Transverse colon (tissue), 4 donors: ENCODE measurements at regions of chr22 and their contacts with region 1.

Region 1: DNA sequence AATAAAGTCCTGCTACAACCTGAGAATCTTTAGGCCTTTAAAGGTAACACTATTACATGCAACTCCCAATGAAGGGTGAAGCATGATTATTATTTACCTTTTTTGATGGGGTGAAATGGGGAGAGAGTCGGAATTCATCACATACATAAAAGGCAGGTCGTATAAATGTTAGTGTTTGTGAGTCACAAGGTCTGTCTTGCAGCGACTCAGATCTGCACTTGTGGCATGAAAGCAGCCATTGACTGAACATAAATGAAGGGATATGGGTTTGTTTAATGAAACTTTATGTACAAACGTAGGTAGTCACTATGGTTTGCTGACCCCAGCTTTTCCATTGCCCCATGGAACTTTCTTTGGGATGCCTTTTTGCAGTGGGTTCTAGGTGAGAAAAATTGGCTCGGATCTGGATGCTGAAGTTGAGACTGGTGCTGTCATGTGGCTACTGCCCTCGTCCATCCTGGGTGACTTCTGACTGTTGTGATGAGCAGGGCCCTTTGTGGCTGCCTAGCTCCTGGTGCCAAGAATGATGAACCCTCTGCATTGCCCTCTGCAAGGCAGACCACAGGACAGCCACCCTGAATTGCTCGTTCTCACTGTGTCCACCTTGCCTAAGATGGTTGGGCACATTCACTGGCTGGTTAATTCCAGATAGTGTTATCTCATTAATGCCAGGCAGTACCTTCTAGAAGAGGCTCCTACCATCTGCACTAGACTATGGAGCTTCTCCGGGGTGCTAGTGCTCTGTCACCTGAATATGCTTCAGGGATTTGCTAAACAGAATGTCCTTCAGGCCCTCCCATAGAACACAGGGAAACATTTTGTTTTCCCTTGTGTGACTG is 11.3 kb downstream of the GGTLC2 start:
- DNase-seq: no peak
- H3K4me3 ChIP-seq: no peak overlapping the region
- H3K27ac ChIP-seq: no peak overlapping the region
- H3K4me1 ChIP-seq: no peaks in the 10 kb centered on the region
- H3K27me3 ChIP-seq: no peaks in the 10 kb centered on the region
- CTCF ChIP-seq: no peak
- EP300 ChIP-seq: no peak
- POLR2A ChIP-seq: no peak

Region 2: GRCh38 chr22:22609291-22609690 is 46.4 kb before region 1 on chr22:
- in situ Hi-C with region 1: loop called in 1 of 4 experiments (anchors 5 kb)
- intact Hi-C with region 1: no loop called
- DNase-seq: no peak
- H3K4me3 ChIP-seq: no peak overlapping the region
- H3K27ac ChIP-seq: no peak overlapping the region
- H3K4me1 ChIP-seq: no peaks in the 10 kb centered on the region
- H3K27me3 ChIP-seq: no peaks in the 10 kb centered on the region
- CTCF ChIP-seq: no peak
- EP300 ChIP-seq: no peak
- POLR2A ChIP-seq: no peak

Region 3: GRCh38 chr22:22720201-22720723 is 64.6 kb after region 1 on chr22:
- in situ Hi-C with region 1: no loop called
- intact Hi-C with region 1: no loop called
- DNase-seq: peak; percentile 35
- H3K4me3 ChIP-seq: no peak overlapping the region
- H3K27ac ChIP-seq: peak overlapping the region; percentile 45 to 67 (median 62)
- H3K4me1 ChIP-seq: peaks cover 0 to 12% (median 0%) of the 10 kb centered on the region in 4 donors
- H3K27me3 ChIP-seq: no peaks in the 10 kb centered on the region
- CTCF ChIP-seq: peak; percentile 15 to 47 (median 34)
- EP300 ChIP-seq: no peak
- POLR2A ChIP-seq: no peak

Region 4: DNA sequence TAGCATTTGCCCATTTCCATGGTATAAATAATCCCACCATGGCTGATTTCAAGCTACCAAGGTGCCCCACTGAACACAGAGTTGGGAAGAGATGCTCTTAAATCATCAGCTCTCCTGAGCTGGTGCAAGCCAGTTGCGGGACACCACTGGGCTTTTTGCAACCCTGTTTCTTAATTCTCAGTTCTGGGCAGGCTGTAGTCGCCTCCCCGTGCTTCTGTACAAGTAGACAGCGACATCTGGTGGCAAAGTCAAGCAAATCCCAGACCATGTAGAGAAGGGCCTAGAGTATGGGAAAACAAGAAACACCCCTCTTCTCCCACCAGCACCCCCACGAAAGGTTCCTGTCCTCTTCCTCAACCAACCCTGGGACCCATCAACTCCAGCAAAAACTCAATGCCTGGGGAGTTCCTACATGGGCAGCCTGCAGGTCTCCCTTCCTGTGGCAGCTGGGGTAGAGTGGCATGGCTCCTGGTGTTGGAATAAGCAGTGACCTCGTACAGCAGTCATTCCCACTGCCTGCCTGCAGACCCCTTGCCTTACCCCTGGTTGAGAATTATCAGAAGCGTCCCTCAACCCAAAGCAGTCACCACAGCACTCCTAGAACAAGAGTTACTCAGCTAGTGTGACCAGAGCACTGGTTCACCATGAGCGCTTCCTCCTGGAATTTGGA is 300.3 kb after region 1 on chr22:
- in situ Hi-C with region 1: no loop called
- intact Hi-C with region 1: no loop called
- DNase-seq: peak; percentile 73
- H3K4me3 ChIP-seq: no peak overlapping the region
- H3K27ac ChIP-seq: no peak overlapping the region
- H3K4me1 ChIP-seq: peaks cover 0 to 13% (median 6%) of the 10 kb centered on the region in 4 donors
- H3K27me3 ChIP-seq: peaks cover 20% of the 10 kb centered on the region
- CTCF ChIP-seq: peak; percentile 70 to 81 (median 78)
- EP300 ChIP-seq: no peak
- POLR2A ChIP-seq: no peak